ENCODE measurements at regions of chr3 and their contacts with region 1.

Region 1: DNA sequence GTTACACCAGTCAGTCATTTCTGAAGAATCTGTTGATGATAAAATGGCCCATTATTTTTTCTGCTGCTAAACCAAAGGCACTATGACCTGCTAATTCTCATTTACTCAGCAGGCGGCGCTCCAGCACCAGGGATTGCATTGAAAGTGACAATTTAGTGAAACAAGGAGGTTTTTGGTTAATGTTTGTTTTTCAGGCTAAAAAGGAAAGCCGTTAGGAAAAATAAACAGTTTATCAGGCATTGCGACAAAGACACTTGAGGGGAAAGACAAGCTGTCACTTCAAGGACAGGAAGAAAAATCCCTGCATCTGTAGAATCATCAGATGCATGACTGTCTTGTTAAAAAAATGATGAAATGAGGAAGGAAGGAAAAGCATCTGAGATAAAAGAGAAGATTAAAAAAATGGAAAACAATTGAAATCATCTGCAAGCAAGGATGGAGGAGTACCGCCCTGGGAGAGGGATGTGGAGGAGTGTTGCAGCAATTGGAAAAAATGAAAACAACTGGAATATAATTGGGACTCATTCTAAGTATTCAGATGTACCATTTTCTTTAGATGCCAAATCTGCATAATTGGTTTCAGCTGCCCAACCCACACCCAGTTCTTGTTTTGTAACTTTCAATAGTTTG is 54.0 kb downstream of the NR1D2 start:
- DNase-seq: peak; percentile 76 to 91
- ATAC-seq: peak; percentile 66
- H3K4me3 ChIP-seq: no peak overlapping the region
- H3K27ac ChIP-seq: no peak overlapping the region
- H3K4me1 ChIP-seq: peaks cover 0 to 5% of the 10 kb centered on the region in 2 donors
- H3K27me3 ChIP-seq: no peaks in the 10 kb centered on the region

Region 2: GRCh38 chr3:24686808-24687207 is 687.7 kb after region 1 on chr3:
- intact Hi-C with region 1: loop called (anchors 2 to 5 kb)
- DNase-seq: no peak
- ATAC-seq: no peak
- H3K4me3 ChIP-seq: no peak overlapping the region
- H3K27ac ChIP-seq: peak overlapping the region in 1 of 2 donors; percentile 57
- H3K4me1 ChIP-seq: peaks cover 0 to 2% of the 10 kb centered on the region in 2 donors
- H3K27me3 ChIP-seq: peaks cover 0 to 2% of the 10 kb centered on the region in 2 donors

Measured in aorta (tissue), 5 donors.